Panc1 (cell line): ENCODE measurements at regions of chr6 and their contacts with region 1.

Region 1: DNA sequence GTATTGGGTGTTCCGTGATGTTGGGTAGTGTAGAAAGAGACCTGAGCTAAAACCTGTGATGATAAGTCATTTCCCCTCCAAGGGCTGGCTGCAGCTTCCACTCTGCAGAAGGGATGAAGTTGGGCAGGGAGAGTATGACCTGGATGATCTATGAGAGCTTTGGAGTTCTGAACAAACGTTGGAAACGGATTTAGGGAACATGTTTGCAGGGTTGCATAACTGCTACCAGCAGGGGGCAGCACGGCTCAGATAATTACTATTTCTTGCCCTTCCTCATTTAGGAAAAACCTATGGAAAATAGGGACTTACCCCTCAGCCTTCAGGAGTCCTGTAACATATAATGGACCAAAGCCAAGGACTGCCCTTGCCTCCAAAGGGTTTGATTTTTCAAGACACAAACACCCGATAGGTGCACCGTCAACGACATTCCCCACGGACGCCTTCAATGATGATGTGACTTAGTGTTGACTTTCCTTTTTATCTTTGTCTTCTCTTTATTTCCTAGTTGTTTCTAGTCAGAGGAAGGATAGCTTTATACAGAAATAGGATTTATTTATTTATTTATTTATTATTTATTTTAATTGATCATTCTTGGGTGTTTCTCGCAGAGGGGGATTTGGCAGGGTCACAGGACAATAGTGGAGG is 164.9 kb upstream of the SASH1 start:
- DNase-seq: no peak
- ATAC-seq: no peak
- H3K4me3 ChIP-seq: no peak overlapping the region
- H3K27ac ChIP-seq: no peak overlapping the region
- H3K4me1 ChIP-seq: no peaks in the 10 kb centered on the region
- H3K27me3 ChIP-seq: no peaks in the 10 kb centered on the region
- CTCF ChIP-seq: peak; percentile 81

Region 2: DNA sequence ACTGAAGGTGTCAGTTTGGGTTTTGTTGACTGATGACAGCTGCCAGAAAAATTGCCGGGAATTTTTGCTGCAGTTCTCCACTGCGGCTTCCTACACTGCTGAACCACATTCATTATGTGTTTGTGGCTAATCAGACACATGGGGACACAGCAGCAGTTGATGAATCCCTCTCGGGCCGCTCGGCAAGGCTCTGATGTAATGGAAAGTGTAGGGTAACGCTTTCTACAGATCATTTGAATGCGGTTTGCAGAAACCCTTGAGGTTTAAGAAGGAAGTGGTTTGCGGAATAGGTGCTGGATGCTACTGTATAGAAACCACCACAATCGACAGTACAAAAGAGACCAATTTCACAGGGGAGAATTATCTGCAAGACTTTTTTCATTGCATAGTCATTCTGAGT is 26.3 kb after region 1 on chr6:
- CTCF ChIA-PET with region 1: no interaction called
- POLR2A ChIA-PET with region 1: no interaction called
- in situ Hi-C with region 1: no loop called
- intact Hi-C with region 1: no loop called
- DNase-seq: no peak
- ATAC-seq: no peak
- H3K4me3 ChIP-seq: no peak overlapping the region
- H3K27ac ChIP-seq: no peak overlapping the region
- H3K4me1 ChIP-seq: no peaks in the 10 kb centered on the region
- H3K27me3 ChIP-seq: no peaks in the 10 kb centered on the region
- CTCF ChIP-seq: no peak

Region 3: DNA sequence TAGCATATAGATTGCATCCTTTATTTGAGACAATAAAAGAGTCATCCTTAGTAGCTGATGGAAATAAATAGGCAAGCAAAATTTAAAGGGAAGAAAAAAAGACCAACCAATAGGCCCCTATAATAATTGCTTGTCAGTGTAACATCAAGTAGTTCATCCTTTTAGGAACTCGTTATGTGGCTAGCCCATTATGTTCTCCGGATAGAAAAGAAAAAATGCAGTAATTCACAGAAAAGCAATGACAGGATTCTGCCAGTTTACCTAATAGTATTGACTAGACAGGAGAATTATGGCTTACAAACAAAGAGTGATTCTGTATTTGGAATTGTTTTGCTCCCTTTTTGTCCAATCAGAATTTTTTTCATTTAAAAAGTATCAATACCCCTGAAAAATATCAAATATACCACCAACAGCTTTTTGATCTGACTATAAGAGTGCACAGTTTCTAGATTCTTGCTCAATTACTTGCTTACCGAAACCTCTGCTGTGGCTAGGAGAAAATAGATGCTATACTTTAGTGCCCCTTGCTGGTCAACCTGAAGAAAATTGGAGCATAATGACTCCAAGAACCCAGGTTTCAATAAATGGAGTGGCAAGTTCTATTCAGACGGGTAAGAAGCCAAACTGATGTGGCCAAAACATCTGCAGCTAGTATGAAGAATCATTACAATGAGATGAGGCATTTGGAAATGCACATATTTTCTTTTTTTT is 73.4 kb after region 1 on chr6:
- CTCF ChIA-PET with region 1: no interaction called
- POLR2A ChIA-PET with region 1: no interaction called
- in situ Hi-C with region 1: no loop called
- intact Hi-C with region 1: loop called (anchors 2 kb)
- DNase-seq: no peak
- ATAC-seq: no peak
- H3K4me3 ChIP-seq: no peak overlapping the region
- H3K27ac ChIP-seq: no peak overlapping the region
- H3K4me1 ChIP-seq: no peaks in the 10 kb centered on the region
- H3K27me3 ChIP-seq: no peaks in the 10 kb centered on the region
- CTCF ChIP-seq: peak; percentile 51

Region 4: GRCh38 chr6:149334682-149335160 is 1157.0 kb after region 1 on chr6:
- CTCF ChIA-PET with region 1: no interaction called
- POLR2A ChIA-PET with region 1: no interaction called
- in situ Hi-C with region 1: no loop called
- intact Hi-C with region 1: no loop called
- DNase-seq: no peak
- ATAC-seq: no peak
- H3K4me3 ChIP-seq: no peak overlapping the region
- H3K27ac ChIP-seq: no peak overlapping the region
- H3K4me1 ChIP-seq: peaks cover 51% of the 10 kb centered on the region
- H3K27me3 ChIP-seq: no peaks in the 10 kb centered on the region
- CTCF ChIP-seq: no peak